A549 (cell line): ENCODE measurements at regions of chr9 and their contacts with region 1.

Region 1: DNA sequence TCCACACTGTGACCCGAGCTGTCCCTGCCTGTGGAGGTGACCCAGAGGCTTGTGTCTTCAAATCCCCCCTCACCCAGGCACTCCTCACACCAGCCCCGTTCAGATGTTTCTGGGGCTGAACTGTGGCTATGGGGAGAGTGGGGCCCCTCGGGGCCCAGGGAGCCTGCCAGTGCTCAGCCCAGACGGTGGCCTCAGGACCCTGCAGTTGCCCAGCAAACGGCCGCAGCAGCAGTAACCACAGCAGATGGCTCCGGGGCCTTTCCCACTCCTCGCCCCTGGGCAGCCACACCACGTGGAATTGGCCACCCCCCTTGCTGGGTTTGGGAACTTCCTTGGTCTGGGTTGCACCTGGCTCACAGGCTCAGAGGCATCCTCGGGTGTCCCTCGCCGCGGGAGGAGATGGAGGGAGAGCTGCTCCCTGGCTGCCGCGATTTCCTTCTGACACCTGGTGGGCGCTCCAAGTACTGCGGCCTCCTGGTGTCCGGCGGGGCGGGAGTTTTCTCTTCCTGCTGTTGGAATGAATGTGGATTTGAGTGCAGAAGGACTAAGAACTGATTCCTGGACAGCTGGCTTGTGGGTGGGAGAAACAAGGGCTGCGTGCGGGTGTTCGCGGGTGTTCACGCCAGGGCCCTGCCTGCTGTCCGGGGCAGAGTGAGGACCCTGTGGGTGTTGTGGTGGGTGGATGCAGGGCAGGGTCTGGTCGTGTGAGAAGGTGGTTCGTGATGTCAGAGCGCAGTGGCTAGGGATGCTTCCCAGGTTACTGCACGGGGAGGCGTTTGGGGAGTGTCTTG is 97.5 kb downstream of the COL5A1 start:
- DNase-seq: peak; percentile 45 to 78
- ATAC-seq: peak; percentile 62 to 84; a peak in 5 of 6 replicates
- H3K4me3 ChIP-seq: no peak overlapping the region
- H3K27ac ChIP-seq: 0 out of 6 replicates have a peak overlapping the region, but pooled peaks of 1 of the 2 experiments have one; percentile 15
- H3K4me1 ChIP-seq: peaks cover 6% of the 10 kb centered on the region
- CTCF ChIP-seq: peak; percentile 57
- EP300 ChIP-seq: no peak
- POLR2A ChIP-seq: no peak
- RAD21 ChIP-seq: peak; percentile 77 to 80

Region 2: DNA sequence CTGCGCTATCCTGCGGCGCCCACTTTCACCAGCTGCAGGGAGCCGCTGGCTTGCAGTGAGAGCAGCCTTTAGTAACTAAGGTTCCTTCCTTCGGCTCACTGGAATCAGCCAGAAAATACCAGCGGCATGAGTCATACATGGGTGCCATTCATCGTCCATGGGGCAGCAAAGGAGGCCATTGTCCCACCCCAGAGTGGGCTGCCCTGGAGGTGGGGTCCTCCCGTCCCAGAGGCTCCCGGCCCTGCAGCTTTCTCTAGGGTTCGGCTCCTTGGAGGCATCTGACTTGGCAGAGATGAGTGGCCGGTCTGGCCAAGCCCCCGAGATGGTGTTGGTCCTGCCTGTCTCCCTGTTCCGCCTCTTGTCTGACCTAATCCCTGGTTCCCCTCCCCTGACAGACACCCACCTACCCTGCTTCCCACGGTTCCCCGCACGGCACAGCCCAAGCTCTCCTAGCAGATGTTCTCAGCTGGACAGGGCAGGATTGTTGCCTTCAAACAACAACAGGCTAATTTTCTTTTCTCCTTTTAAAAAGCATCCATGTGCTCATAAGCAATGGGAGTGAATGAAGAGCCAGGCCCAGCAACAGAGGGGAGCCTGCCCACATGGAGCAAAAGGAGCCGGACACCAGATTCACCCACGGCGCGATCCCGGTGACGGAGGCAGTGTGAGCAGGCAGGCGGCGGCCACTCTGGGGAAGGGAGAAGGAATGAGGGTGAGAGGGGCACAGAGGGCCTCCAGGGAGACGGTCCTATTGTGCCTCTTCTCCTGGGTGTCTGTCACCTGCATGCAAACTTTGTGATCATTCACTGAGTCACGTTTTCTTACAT is 194.5 kb before region 1 on chr9:
- CTCF ChIA-PET with region 1: no interaction called
- POLR2A ChIA-PET with region 1: no interaction called
- DNase-seq: peak in 1 of 2 experiments; percentile 30
- ATAC-seq: peak in 1 of 2 experiments; percentile 61; a peak in 3 of 6 replicates
- H3K4me3 ChIP-seq: no peak overlapping the region
- H3K27ac ChIP-seq: peak overlapping the region in 1 of 2 experiments; percentile 70; a peak in 3 of 6 replicates
- H3K4me1 ChIP-seq: peaks cover 10% of the 10 kb centered on the region
- CTCF ChIP-seq: no peak
- EP300 ChIP-seq: no peak
- POLR2A ChIP-seq: no peak
- RAD21 ChIP-seq: no peak

Region 3: GRCh38 chr9:134689321-134690181 is 49.5 kb before region 1 on chr9:
- CTCF ChIA-PET with region 1: interaction called, 15 read pairs
- POLR2A ChIA-PET with region 1: no interaction called
- DNase-seq: peak; percentile 59 to 82
- ATAC-seq: peak; percentile 89 to 98
- H3K4me3 ChIP-seq: no peak overlapping the region
- H3K27ac ChIP-seq: peak overlapping the region; percentile 17 to 64; a peak in 3 of 6 replicates
- H3K4me1 ChIP-seq: peaks cover 10% of the 10 kb centered on the region
- CTCF ChIP-seq: peak; percentile 59
- EP300 ChIP-seq: no peak
- POLR2A ChIP-seq: no peak
- RAD21 ChIP-seq: peak; percentile 42 to 44

Region 4: DNA sequence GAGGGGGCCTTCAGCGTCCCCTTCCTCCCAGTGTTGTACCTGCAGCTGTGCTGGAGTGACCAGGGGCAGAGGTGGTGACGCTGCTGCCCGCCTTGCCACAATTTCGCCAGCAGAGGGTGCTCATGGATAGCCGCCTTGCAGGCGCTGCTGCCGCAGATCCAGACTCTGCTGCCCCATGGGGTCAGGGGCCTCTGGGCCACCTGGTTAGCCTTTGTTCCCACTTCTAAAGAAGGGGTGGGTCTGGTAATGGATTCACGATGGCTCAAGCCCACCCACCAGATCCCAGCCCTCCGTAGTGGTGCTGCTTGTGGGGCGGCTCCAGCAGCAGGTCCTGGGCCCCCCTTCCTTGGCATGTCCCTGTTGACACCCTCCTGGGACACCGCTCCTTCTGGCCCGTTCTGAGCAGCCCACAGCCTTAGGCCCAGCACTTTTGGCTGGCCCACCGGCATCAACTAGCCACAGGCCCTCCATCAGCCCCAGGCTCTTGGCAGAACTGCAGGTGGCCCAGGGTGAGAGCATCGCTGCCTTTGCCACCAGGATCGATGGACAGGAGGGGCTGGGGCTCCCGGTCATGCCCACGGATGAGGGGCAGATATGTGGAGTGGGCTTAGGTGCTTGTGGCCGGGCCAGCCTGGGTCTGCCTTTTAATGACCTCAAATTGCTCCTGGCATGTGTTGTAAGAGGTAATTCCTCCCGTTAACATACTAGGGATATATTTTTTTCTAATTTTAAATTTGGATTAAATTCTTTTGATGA is 40.3 kb before region 1 on chr9:
- CTCF ChIA-PET with region 1: interaction called, 25 read pairs
- POLR2A ChIA-PET with region 1: no interaction called
- DNase-seq: peak; percentile 74 to 81
- ATAC-seq: peak; percentile 83 to 92
- H3K4me3 ChIP-seq: no peak overlapping the region
- H3K27ac ChIP-seq: peak overlapping the region; percentile 62 to 78; a peak in 5 of 6 replicates
- H3K4me1 ChIP-seq: peaks cover 11% of the 10 kb centered on the region
- CTCF ChIP-seq: peak; percentile 82
- EP300 ChIP-seq: no peak
- POLR2A ChIP-seq: no peak
- RAD21 ChIP-seq: peak; percentile 88 to 90

Region 5: GRCh38 chr9:134725605-134725940 is 13.5 kb before region 1 on chr9:
- CTCF ChIA-PET with region 1: interaction called, 16 read pairs
- POLR2A ChIA-PET with region 1: no interaction called
- DNase-seq: no peak
- ATAC-seq: no peak
- H3K4me3 ChIP-seq: no peak overlapping the region
- H3K27ac ChIP-seq: no peak overlapping the region
- H3K4me1 ChIP-seq: no peaks in the 10 kb centered on the region
- CTCF ChIP-seq: no peak
- EP300 ChIP-seq: no peak
- POLR2A ChIP-seq: no peak
- RAD21 ChIP-seq: no peak